ENCODE measurements at regions of chr19 and their contacts with region 1.

Region 1: DNA sequence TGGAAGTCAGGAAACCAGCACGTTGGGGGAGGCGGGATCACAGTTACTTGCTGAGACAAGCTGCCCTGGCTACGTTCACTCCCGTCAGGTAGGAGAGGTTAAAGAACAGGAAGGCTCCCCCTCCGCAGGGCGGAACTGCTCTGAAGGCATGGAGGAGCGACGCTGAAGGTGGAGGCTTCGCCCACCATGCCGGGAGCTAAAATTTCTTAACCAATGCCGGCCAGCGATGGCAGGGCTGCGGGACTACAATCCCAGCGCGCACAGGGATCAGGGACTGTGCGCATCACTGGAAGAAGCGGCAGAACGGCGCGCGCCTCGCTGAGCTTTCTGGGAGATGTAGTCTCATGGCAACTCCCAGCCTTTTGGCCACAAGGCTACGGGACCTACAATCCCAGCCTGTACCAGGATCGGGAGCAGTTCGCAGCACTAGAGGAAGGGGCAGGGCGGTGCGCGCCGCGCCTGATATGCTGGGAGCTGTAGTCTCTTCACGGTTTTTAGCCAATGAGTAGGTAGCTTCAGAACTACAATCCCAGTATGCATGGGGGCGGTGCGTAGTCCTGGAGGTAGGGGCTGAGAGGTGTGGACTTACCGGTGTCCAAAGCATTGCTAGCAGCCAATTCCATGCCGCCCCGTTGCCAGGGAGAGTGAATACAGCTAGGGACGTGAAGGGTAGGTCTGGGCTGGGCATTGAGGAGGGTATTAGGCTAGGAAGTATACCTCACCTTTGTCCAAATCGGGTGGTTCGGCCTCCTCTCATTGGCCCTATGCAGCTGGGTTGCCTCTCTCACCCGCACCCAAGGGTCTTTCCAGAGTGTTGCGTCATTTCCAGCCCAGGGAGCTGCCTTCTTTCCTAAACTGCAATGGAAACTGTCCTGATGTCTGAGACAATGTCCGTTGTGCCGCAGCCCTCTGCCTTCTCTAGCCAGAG is 12.8 kb upstream of the ZNF682 start:
- DNase-seq: peak; percentile 24 to 70 (median 43)
- H3K4me3 ChIP-seq: peak overlapping the region; percentile 80
- H3K4me3 Mint-ChIP-seq: peak overlapping the region; percentile 98 to 100 (median 99)
- H3K27ac ChIP-seq: peak overlapping the region; percentile 17
- H3K27ac Mint-ChIP-seq: peak overlapping the region; percentile 62 to 96 (median 94)
- H3K4me1 ChIP-seq: peaks cover 8% of the 10 kb centered on the region
- H3K4me1 Mint-ChIP-seq: peaks cover 13 to 18% (median 15%) of the 10 kb centered on the region in 3 donors
- H3K27me3 ChIP-seq: no peaks in the 10 kb centered on the region
- H3K27me3 Mint-ChIP-seq: peaks cover 6 to 8% of the 10 kb centered on the region in 2 donors

Region 2: GRCh38 chr19:20039203-20039723 is 12.8 kb before region 1 on chr19 and contains the start of gene ZNF682:
- CTCF ChIA-PET with region 1: interaction called, 4 read pairs
- POLR2A ChIA-PET with region 1: interaction called, 20 read pairs
- DNase-seq: peak; percentile 91 to 97 (median 93)
- H3K4me3 ChIP-seq: peak within 1 kb of the TSS; percentile 91
- H3K4me3 Mint-ChIP-seq: peak within 1 kb of the TSS; percentile 95 to 98 (median 97)
- H3K27ac ChIP-seq: peak within 1 kb of the TSS; percentile 55
- H3K27ac Mint-ChIP-seq: peak within 1 kb of the TSS; percentile 72 to 98 (median 94)
- H3K4me1 ChIP-seq: peaks cover 11% of the 10 kb centered on the region
- H3K4me1 Mint-ChIP-seq: peaks cover 14 to 25% (median 16%) of the 10 kb centered on the region in 3 donors
- H3K27me3 ChIP-seq: no peaks in the 10 kb centered on the region
- H3K27me3 Mint-ChIP-seq: peaks cover 0 to 8% of the 10 kb centered on the region in 2 donors
- total RNA-seq, gene ZNF682: 9.6 to 10.3 TPM

Region 3: DNA sequence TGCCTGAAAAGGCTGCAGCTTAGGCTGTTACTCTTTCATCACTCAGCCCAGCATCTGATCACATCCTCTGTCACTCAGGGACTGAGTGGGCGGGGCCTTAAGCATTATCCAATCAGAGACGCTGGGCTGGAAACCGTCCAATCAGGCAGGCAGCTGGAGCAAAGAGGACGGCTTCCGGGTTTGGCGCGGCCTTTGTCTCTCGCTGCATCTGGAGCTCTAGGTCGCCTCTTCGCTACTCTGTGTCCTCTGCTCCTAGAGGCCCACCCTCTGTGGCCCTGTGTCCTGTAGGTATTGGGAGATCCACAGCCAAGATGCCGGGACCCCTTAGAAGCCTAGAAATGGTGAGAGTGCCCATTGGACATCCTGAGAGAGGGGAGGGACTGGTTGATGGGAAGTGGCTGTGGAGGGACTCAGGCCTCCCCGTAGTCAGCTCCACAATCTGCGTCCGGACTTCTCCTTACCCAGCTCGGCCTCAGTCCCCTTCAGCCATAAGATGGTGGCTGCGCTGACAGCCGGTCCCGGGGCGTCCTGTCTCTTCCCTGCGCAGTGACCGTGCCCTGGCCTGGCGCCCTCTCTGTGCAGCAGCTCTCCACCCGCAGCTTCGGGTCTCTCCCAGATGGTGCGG is 115.0 kb after region 1 on chr19 and contains the start of gene ZNF486:
- CTCF ChIA-PET with region 1: no interaction called
- POLR2A ChIA-PET with region 1: interaction called, 10 read pairs
- DNase-seq: peak; percentile 86 to 97 (median 91)
- H3K4me3 ChIP-seq: peak within 1 kb of the TSS; percentile 96
- H3K4me3 Mint-ChIP-seq: peak within 1 kb of the TSS; percentile 94 to 99 (median 97)
- H3K27ac ChIP-seq: peak within 1 kb of the TSS; percentile 71
- H3K27ac Mint-ChIP-seq: peak within 1 kb of the TSS; percentile 58 to 99 (median 94)
- H3K4me1 ChIP-seq: peaks cover 13% of the 10 kb centered on the region
- H3K4me1 Mint-ChIP-seq: peaks cover 44 to 73% (median 44%) of the 10 kb centered on the region in 3 donors
- H3K27me3 ChIP-seq: no peaks in the 10 kb centered on the region
- H3K27me3 Mint-ChIP-seq: peaks cover 0 to 1% of the 10 kb centered on the region in 2 donors
- total RNA-seq, gene ZNF486: 10.5 to 12.0 TPM

Measured in CD8-positive, alpha-beta memory T cell (primary cell).